Activated CD8-positive, alpha-beta memory T cell treated with anti-CD3 and anti-CD28 coated beads, Interleukin-2, amount 10 ng/mL, durations not matched to agents 7 days and 5 days (primary cell): ENCODE measurements at regions of chr17 and their contacts with region 1.

Region 1: GRCh38 chr17:73429440-73430164 is 117.8 kb upstream of the CDC42EP4 start:
- DNase-seq: peak; percentile 89
- ATAC-seq: peak; percentile 98
- H3K4me3 Mint-ChIP-seq: no peak overlapping the region
- H3K27ac Mint-ChIP-seq: no peak overlapping the region
- H3K4me1 Mint-ChIP-seq: peaks cover 15% of the 10 kb centered on the region
- H3K27me3 Mint-ChIP-seq: peaks cover 3% of the 10 kb centered on the region

Region 2: DNA sequence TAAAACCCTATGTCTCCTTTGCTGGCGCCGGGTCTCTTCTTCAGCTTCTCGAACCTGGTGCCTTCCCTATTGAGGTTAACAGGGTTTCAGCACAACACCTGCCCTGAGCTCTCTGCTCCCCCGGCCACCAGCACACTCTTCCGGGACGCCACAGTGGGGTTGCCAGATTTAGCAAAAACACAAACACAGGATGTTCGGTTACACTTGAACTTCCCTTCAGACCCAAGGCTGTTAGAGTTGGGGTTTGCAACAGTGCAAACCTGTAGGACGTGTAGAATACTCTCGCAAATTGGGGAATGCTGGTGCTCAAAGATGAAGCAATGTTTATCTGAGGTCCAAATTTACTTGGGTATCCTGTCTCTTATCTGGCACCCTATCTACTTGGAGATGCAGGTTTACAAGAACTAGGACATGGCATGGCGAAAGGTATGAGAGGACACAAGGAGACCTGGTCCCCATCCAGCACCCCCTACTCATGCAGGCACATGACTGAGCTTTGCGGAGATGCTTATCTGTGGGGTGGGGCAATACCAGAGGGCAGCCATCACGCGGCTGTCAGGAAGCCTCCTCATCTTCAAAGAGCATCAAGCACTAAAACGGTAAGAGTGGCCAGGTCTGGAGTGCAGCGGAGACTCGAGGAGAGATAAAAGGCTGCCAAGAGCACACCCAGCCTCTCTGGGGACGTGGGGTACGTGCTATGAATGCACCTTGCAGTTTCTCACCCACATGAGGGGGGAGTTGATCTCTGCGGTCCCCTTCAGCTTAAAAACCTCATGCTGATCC is 161.9 kb after region 1 on chr17:
- CTCF ChIA-PET with region 1: interaction called, 17 read pairs
- DNase-seq: peak; percentile 84
- ATAC-seq: peak; percentile 82
- H3K4me3 Mint-ChIP-seq: peak overlapping the region; percentile 48
- H3K27ac Mint-ChIP-seq: peak overlapping the region; percentile 94
- H3K4me1 Mint-ChIP-seq: peaks cover 59% of the 10 kb centered on the region
- H3K27me3 Mint-ChIP-seq: no peaks in the 10 kb centered on the region

Region 3: DNA sequence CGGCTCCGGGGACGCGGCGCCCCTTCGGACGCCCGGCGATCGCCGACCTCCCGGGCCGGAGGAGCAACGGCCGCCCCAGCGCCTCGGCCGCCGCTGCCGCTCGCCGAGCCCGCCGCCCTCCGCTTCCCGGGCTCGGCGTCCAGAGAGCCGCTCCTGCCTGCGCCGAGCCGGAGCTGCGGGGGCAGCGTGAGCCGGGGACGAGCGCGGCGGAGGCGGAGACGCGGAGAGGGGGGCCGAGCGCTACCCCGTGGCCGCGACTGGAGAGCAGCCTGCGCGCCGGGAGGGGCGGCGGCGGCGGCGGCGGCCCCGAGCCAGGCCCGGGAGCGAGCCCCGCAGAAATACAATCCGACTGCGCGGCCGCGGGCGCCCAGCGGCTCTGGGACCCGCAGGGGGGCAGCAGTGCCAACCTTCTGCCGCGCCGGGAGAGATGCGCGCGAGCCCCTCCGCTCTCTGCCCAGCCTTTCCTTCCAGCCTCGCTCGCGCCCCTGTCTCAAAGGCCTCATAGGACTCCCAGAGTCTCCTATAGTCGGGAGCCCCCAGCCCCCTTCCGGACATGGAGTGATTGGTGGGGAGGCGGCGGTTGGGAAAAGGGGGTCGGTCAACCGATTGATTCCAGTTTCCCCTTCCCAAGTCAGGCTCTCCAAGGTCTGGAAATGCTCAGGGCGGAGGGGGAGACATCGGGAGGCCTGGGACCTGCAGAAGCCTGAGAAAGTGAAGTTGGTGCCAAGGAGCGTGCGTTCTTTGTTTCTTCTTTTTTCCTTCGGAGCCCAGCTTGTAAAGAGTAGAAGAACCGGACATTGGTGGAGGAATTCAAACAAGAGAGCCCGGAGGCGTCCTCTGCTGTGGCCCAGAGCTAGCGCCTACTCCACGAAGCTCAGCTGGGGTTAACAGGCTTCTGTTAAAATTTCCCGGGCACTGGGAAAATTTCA is 215.7 kb after region 1 on chr17:
- CTCF ChIA-PET with region 1: interaction called, 15 read pairs
- DNase-seq: no peak
- ATAC-seq: peak; percentile 63
- H3K4me3 Mint-ChIP-seq: no peak overlapping the region
- H3K27ac Mint-ChIP-seq: no peak overlapping the region
- H3K4me1 Mint-ChIP-seq: peaks cover 16% of the 10 kb centered on the region
- H3K27me3 Mint-ChIP-seq: peaks cover 69% of the 10 kb centered on the region